Heart left ventricle (tissue), 16 donors: ENCODE measurements at regions of chr6 and their contacts with region 1.

Region 1: GRCh38 chr6:153044295-153044694 is 41.8 kb upstream of the MTRF1L start:
- DNase-seq: no peak
- ATAC-seq: no peak
- H3K4me3 ChIP-seq: no peak overlapping the region
- H3K27ac ChIP-seq: no peak overlapping the region
- H3K4me1 ChIP-seq: no peaks in the 10 kb centered on the region
- H3K27me3 ChIP-seq: no peaks in the 10 kb centered on the region
- CTCF ChIP-seq: no peak
- POLR2A ChIP-seq: no peak

Region 2: DNA sequence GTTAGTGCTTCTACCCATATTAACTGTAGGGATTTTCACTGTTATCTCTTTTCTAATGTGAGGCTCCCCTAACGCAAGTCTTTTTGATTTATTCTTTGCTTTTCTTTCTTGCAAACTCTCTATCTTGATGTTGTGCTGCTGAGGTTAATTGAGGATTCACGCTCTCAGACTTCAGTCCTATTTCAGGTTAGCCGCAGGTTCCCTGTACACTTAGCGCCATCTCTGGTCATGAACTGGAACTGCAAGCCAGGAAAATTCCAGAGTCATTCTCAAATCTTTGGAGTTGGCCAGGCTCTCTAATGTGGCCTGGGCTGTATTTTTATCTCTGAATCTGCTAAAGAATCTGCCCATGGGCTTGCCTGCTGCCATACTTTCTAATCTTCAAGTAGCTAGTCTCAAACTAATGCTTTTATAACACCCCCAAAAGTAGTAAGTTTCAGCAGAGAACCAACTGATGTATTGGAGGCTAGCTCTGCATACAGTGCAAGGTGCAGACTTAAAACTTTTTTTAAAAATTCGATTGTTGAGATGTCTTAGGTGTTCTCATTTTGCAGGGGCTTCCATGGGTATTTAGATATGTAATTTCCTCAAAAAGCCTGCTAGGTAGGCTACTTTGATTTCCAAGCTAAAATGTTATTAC is 903.6 kb after region 1 on chr6:
- intact Hi-C with region 1: loop called in 2 of 10 experiments (anchors 5 to 10 kb)
- DNase-seq: peak in 1 of 5 donors; percentile 6
- ATAC-seq: no peak
- H3K4me3 ChIP-seq: no peak overlapping the region
- H3K27ac ChIP-seq: no peak overlapping the region
- H3K4me1 ChIP-seq: no peaks in the 10 kb centered on the region
- H3K27me3 ChIP-seq: no peaks in the 10 kb centered on the region
- CTCF ChIP-seq: peak; percentile 53 to 91 (median 77)
- POLR2A ChIP-seq: no peak